ENCODE measurements at regions of chr21 and their contacts with region 1.

Region 1: DNA sequence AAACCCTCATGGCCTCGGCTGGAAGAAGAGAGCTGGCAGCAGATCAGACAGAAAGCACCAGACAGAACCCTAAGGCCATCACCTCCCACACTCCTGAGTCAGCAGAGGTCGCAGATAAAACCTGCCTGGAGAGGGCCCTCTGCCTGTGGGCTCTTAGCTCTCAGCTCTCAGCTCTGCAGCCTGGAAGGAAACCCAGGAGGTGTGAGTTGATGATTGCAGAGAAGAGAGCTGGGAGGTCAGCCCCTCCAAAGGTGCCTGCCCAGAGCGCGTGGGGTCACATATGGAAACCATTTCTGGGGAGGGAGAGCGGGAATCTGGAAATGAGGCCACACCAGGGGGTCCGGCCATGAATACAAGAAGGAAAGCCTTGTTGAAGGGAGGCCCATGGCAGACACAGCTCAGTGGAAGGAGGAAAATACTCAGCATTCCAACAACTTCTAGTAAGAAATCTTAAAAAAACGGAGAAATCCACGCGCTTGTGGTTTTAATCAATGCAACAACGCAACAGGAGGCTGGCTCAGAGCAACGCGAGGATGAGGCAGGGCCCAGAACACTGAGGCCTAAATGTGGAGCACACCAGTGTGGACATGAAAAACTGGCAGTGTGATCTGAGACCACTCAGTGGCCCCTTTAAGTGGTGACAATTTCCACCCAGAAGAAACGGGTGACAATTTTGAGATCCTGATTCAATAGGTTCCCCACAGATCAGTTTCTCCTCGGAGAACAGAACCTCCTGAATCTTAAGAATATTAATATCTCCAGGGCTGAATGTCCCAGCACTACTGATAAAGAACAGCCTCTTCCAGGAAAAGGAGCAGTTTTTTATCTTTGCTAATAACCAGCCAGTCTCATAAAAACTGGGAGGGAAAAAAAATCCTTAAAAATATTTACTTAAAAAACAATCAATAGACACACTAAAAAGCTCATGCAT is 45.7 kb downstream of the PSMG1 start:
- DNase-seq: no peak
- ATAC-seq: peak in 5 of 8 donors; percentile 28 to 55 (median 29)
- H3K4me3 ChIP-seq: no peak overlapping the region
- H3K27ac ChIP-seq: peak overlapping the region in 5 of 10 donors; percentile 26 to 64 (median 54)
- H3K4me1 ChIP-seq: peaks cover 0 to 17% (median 0%) of the 10 kb centered on the region in 9 donors
- H3K27me3 ChIP-seq: no peaks in the 10 kb centered on the region
- CTCF ChIP-seq: no peak

Region 2: DNA sequence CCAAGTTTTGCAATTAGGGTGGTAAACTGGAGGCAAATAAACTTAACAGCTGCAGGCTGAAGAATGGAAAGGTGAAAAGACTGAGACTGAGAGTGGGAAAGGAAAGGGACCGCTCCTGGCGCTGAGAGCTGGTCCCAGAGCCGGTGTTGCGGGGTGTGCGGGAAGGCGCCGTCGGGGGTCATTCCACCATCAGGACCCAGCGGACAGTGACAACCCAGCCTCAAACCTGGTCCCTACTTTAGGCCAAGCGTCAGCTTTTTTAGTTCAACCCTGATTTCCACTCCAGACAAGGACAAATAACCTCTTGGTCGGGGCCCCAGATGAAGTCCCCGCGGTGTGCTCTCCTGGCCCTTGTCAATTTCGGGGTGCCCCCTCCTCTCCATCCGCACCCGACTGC is 477.6 kb before region 1 on chr21:
- intact Hi-C with region 1: loop called in 2 of 10 experiments (anchors 1 to 5 kb)
- DNase-seq: no peak
- ATAC-seq: peak in 1 of 8 donors; percentile 10
- H3K4me3 ChIP-seq: peak overlapping the region in 8 of 10 donors; percentile 46 to 64 (median 60)
- H3K27ac ChIP-seq: no peak overlapping the region
- H3K4me1 ChIP-seq: peaks cover 0 to 17% (median 9%) of the 10 kb centered on the region in 9 donors
- H3K27me3 ChIP-seq: peaks cover 12 to 100% (median 57%) of the 10 kb centered on the region in 7 donors
- CTCF ChIP-seq: no peak

Region 3: DNA sequence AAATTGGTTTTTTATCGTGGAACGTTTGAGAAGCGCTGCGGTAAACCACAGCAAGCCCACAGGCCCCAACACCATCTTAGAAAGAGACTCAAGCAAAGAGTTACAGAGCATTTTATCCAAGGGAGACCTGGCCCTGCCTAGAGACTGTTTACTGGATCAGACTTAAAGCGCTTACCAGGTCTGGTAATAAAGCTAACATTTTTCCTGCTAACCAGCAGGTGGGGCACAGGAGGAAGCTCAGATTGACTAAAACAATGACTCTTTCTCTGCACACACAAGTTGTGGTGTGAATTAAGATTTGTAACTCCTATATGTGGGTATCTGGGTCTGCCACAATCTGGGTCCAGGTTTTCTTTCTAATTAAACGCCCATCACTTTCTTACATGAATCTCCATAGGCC is 468.3 kb before region 1 on chr21:
- intact Hi-C with region 1: loop called in 2 of 10 experiments (anchors 5 kb)
- DNase-seq: no peak
- ATAC-seq: peak in 2 of 8 donors; percentile 20 to 52
- H3K4me3 ChIP-seq: no peak overlapping the region
- H3K27ac ChIP-seq: no peak overlapping the region
- H3K4me1 ChIP-seq: peaks cover 0 to 10% (median 0%) of the 10 kb centered on the region in 9 donors
- H3K27me3 ChIP-seq: peaks cover 0 to 70% (median 0%) of the 10 kb centered on the region in 7 donors
- CTCF ChIP-seq: peak in 8 of 9 donors; percentile 24 to 60 (median 46)